ENCODE measurements at regions of chr17 and their contacts with region 1.

Region 1: DNA sequence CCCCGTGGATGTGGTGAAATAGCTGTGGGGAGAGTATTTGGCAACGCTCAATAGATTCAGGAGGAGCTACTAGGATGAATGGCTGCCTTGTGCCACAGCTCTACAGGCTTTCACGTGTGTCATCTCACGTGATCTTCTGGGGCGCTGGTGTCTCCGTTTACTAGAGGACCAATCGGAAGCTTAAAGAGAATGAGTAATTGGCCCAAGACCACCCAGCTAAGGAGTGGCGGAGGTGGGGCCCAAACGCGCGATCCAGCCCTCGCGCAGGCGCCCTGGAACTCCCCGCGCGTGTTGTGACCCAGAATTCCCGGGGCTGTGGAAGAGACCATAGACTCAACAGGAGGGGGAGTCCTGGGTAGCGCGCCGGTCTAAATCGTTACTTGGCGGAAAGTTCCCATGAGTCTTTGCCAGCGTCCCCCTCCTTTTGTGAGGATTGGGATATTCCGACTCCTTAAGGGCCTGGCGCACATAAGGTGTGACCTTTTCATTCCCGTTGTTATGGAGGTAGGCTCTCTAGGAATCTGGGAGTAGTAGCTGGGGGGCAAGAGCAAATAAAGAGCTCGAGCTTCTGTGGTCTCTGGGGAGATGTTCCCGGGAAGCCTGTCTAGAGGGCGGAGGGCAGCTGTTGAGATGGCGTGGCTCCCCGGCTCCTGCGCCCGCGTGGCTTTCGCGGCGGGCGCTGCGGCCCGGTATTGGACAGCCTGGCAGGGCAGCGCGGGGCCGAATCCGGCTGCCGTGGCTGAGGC is 23.4 kb downstream of the TRPV2 start:
- DNase-seq: peak; percentile 92 to 98
- H3K4me3 ChIP-seq: peak overlapping the region; percentile 85 to 89
- H3K27ac ChIP-seq: peak overlapping the region; percentile 69 to 76
- H3K4me1 ChIP-seq: peaks cover 4 to 26% of the 10 kb centered on the region in 2 donors
- H3K27me3 ChIP-seq: no peaks in the 10 kb centered on the region
- CTCF ChIP-seq: no peak

Region 2: DNA sequence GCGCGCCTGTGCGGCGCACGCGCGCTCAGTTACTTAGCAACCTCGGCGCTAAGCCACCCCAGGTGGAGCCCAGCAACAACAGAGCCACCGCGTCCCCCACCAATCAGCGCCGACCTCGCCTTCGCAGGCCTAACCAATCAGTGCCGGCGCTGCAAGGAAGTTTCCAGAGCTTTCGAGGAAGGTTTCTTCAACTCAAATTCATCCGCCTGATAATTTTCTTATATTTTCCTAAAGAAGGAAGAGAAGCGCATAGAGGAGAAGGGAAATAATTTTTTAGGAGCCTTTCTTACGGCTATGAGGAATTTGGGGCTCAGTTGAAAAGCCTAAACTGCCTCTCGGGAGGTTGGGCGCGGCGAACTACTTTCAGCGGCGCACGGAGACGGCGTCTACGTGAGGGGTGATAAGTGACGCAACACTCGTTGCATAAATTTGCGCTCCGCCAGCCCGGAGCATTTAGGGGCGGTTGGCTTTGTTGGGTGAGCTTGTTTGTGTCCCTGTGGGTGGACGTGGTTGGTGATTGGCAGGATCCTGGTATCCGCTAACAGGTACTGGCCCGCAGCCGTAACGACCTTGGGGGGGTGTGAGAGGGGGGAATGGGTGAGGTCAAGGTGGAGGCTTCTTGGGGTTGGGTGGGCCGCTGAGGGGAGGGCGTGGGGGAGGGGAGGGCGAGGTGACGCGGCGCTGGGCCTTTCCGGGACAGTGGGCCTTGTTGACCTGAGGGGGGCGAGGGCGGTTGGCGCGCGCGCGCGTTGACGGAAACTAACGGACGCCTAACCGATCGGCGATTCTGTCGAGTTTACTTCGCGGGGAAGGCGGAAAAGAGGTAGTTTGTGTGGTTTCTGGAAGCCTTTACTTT is 57.9 kb before region 1 on chr17 and contains the start of gene UBB:
- intact Hi-C with region 1: loop called (anchors 1 kb)
- DNase-seq: peak; percentile 92 to 97
- H3K4me3 ChIP-seq: peak within 1 kb of the TSS; percentile 82 to 83
- H3K27ac ChIP-seq: peak within 1 kb of the TSS; percentile 90 to 94
- H3K4me1 ChIP-seq: peaks cover 8 to 15% of the 10 kb centered on the region in 2 donors
- H3K27me3 ChIP-seq: no peaks in the 10 kb centered on the region
- CTCF ChIP-seq: no peak
- total RNA-seq, gene UBB: 615 TPM

Region 3: GRCh38 chr17:16415031-16415924 is 23.5 kb before region 1 on chr17 and contains the start of gene TRPV2:
- intact Hi-C with region 1: loop called (anchors 1 kb)
- DNase-seq: no peak
- H3K4me3 ChIP-seq: peak within 1 kb of the TSS; percentile 44 to 61
- H3K27ac ChIP-seq: peak within 1 kb of the TSS; percentile 81 to 97
- H3K4me1 ChIP-seq: peaks cover 14 to 26% of the 10 kb centered on the region in 2 donors
- H3K27me3 ChIP-seq: no peaks in the 10 kb centered on the region
- CTCF ChIP-seq: peak in 1 of 3 experiments; percentile 32
- total RNA-seq, gene TRPV2: 26.1 TPM

Measured in ascending aorta (tissue), 2 donors.